ENCODE measurements at regions of chr12 and their contacts with region 1.

Region 1: DNA sequence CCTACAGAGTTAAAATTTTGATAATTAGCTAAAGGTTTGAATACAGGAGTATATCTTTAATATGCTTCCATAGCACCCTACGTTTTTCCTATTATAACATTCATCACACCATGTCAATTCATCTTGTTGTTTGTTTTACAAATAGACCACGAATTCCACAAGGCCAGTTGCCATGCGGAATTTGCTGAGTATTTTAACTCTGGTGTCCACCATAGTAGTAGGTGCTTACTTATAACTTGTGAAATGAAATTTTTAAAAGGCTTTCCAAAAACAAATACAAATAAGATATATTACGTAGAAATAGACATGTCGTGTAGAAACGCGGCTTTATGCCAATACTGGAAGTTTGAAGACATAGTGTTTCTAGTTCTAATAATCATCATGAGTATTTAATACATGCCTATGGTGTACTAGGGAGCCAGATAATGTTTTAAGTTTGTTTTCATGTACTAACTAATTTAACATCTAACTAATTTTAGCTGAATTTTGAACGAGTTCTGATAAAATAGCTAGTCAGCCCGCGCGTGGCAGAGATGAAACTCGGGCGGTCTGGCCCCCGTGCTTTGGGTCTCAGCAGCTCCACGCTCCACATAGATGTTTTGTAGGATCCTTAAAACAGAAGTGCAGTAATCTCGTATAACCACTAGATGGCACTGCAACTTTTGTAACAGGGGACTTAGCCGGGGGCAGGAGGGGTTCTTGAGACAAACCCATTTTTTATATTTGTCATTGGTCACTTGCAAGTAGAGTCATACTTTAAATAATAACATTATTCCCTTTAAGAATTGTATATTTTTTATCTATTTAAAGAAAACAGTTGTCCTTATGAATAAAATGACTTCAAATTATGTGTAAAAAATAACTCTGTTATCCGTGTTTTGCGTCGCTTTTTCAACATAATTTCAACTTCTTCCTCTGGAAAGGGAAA is 10.2 kb downstream of the CD69 start:
- DNase-seq: peak; percentile 66 to 82 (median 74)
- ATAC-seq: peak; percentile 77
- H3K4me3 ChIP-seq: no peak overlapping the region
- H3K27ac ChIP-seq: peak overlapping the region; percentile 24; the same call in 1 of the 3 replicates
- H3K4me1 ChIP-seq: no peaks in the 10 kb centered on the region; a peak in 1 of 5 replicates
- H3K27me3 ChIP-seq: no peaks in the 10 kb centered on the region
- CTCF ChIP-seq: peak; percentile 73 to 82 (median 74)
- EP300 ChIP-seq: no peak
- POLR2A ChIP-seq: no peak
- RAD21 ChIP-seq: peak; percentile 76 to 85

Region 2: DNA sequence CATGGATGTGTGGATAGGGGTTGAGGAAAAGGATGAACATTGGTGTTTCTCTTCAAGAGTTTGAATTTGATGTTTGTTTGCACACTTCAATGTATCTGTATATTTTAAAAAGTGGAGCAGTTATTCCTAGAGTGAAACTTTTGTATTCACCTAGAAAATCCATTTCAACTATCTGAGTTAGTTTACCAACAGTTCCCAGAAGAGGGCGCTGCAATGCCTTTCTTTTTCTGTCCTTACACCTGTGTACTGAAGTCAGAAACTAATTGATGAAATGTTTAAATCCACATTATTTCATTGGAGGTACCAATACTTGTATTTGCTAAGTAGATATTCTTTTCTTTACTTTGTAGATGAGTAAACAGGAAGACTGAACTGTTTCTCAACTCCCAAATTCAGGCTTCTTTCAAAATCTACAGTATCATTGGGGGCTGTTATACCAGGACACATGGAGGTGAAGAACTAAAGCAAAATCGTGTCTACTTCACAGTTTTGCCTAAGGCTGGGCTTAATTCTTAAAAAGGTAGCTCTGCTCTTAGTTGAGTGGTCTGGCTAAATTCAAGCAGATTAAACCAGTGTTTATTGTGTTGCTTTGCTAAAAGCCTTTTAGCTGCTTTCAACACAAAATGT is 116.2 kb before region 1 on chr12:
- CTCF ChIA-PET with region 1: no interaction called
- POLR2A ChIA-PET with region 1: no interaction called
- in situ Hi-C with region 1: no loop called
- intact Hi-C with region 1: loop called (anchors 1 kb)
- DNase-seq: peak; percentile 21 to 69 (median 30)
- ATAC-seq: peak; percentile 70
- H3K4me3 ChIP-seq: no peak overlapping the region
- H3K27ac ChIP-seq: no peak overlapping the region
- H3K4me1 ChIP-seq: no peaks in the 10 kb centered on the region; a peak in 1 of 5 replicates
- H3K27me3 ChIP-seq: no peaks in the 10 kb centered on the region
- CTCF ChIP-seq: peak; percentile 52 to 66 (median 54); a peak in 5 of 6 replicates
- EP300 ChIP-seq: no peak
- POLR2A ChIP-seq: no peak
- RAD21 ChIP-seq: peak; percentile 27 to 82; a peak in 3 of 4 replicates

Region 3: GRCh38 chr12:9797722-9798619 is 47.4 kb after region 1 on chr12:
- CTCF ChIA-PET with region 1: interaction called, 71 read pairs
- POLR2A ChIA-PET with region 1: interaction called, 5 read pairs
- in situ Hi-C with region 1: loop called (anchors 5 kb)
- intact Hi-C with region 1: loop called (anchors 1 kb)
- DNase-seq: peak; percentile 18 to 88 (median 46)
- ATAC-seq: peak; percentile 99
- H3K4me3 ChIP-seq: no peak overlapping the region
- H3K27ac ChIP-seq: no peak overlapping the region
- H3K4me1 ChIP-seq: peaks cover 0 to 11% of the 10 kb centered on the region in 2 experiments; a peak in 2 of 5 replicates
- H3K27me3 ChIP-seq: no peaks in the 10 kb centered on the region
- CTCF ChIP-seq: peak; percentile 79 to 86 (median 85)
- EP300 ChIP-seq: no peak
- POLR2A ChIP-seq: no peak
- RAD21 ChIP-seq: peak; percentile 93 to 98

Region 4: GRCh38 chr12:9888665-9889273 is 138.2 kb after region 1 on chr12:
- CTCF ChIA-PET with region 1: no interaction called
- POLR2A ChIA-PET with region 1: no interaction called
- in situ Hi-C with region 1: no loop called
- intact Hi-C with region 1: no loop called
- DNase-seq: no peak
- ATAC-seq: no peak
- H3K4me3 ChIP-seq: no peak overlapping the region
- H3K27ac ChIP-seq: no peak overlapping the region
- H3K4me1 ChIP-seq: no peaks in the 10 kb centered on the region
- H3K27me3 ChIP-seq: no peaks in the 10 kb centered on the region
- CTCF ChIP-seq: no peak
- EP300 ChIP-seq: no peak
- POLR2A ChIP-seq: no peak
- RAD21 ChIP-seq: no peak

Region 5: GRCh38 chr12:9925708-9926393 is 175.3 kb after region 1 on chr12:
- CTCF ChIA-PET with region 1: interaction called, 5 read pairs
- POLR2A ChIA-PET with region 1: no interaction called
- in situ Hi-C with region 1: loop called (anchors 10 kb)
- intact Hi-C with region 1: loop called (anchors 5 kb)
- DNase-seq: peak in 2 of 4 experiments; percentile 7 to 23
- ATAC-seq: 0 out of 3 replicates have a peak, but pooled peaks have one; percentile 45
- H3K4me3 ChIP-seq: no peak overlapping the region
- H3K27ac ChIP-seq: no peak overlapping the region
- H3K4me1 ChIP-seq: no peaks in the 10 kb centered on the region
- H3K27me3 ChIP-seq: no peaks in the 10 kb centered on the region
- CTCF ChIP-seq: peak; percentile 33 to 42 (median 33); a peak in 4 of 6 replicates
- EP300 ChIP-seq: no peak
- POLR2A ChIP-seq: no peak
- RAD21 ChIP-seq: peak; percentile 33 to 52

Region 6: GRCh38 chr12:10140001-10140400 is 389.5 kb after region 1 on chr12:
- CTCF ChIA-PET with region 1: interaction called, 6 read pairs
- POLR2A ChIA-PET with region 1: no interaction called
- in situ Hi-C with region 1: loop called (anchors 5 kb)
- intact Hi-C with region 1: loop called (anchors 2 kb)
- DNase-seq: peak in 2 of 4 experiments; percentile 7 to 44
- ATAC-seq: no peak
- H3K4me3 ChIP-seq: no peak overlapping the region
- H3K27ac ChIP-seq: no peak overlapping the region
- H3K4me1 ChIP-seq: no peaks in the 10 kb centered on the region
- H3K27me3 ChIP-seq: no peaks in the 10 kb centered on the region; a peak in 1 of 5 replicates
- CTCF ChIP-seq: peak; percentile 31 to 55 (median 43); a peak in 3 of 6 replicates
- EP300 ChIP-seq: no peak
- POLR2A ChIP-seq: no peak
- RAD21 ChIP-seq: peak; percentile 61 to 67

Measured in K562 (cell line).